ENCODE measurements at regions of chr4 and their contacts with region 1.

Region 1: GRCh38 chr4:102598086-102598761 is 97.1 kb downstream of the NFKB1 start:
- DNase-seq: peak; percentile 34
- H3K4me3 Mint-ChIP-seq: peak overlapping the region; percentile 37
- H3K27ac Mint-ChIP-seq: peak overlapping the region; percentile 89
- H3K4me1 Mint-ChIP-seq: peaks cover 78% of the 10 kb centered on the region
- H3K27me3 Mint-ChIP-seq: no peaks in the 10 kb centered on the region

Region 2: DNA sequence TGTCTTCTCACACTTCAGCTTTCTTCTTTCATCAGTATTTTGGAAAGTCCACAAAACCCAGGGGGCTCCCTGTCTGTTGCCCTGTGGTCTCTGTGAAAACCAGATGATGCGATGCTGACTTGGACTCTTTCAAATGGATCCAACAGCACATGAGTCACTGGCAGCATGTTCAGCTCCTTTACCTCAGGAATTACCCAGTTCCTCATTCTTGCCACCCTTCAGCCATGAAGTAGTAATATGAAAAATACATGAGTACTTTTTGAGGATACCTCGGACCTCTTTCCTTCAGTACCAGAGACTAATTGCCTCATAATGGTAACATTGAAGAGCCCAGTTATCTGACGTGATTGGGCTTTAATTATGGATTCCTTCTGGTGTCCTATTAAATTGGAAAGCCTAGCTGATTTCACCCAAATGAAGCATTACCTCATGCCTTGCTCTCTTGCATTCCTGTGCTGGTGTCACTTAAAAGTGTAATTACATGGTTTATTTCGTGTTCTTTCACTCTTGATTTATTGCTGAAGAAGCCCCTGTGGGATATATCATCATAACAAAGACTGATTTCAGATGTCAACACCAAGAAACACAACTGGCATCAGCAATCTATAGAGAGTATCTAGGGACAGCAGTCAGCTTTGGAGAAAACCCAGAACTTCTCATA is 33.7 kb before region 1 on chr4:
- intact Hi-C with region 1: loop called (anchors 1 kb)
- DNase-seq: no peak
- H3K4me3 Mint-ChIP-seq: no peak overlapping the region
- H3K27ac Mint-ChIP-seq: peak overlapping the region; percentile 69
- H3K4me1 Mint-ChIP-seq: peaks cover 79% of the 10 kb centered on the region
- H3K27me3 Mint-ChIP-seq: no peaks in the 10 kb centered on the region

Region 3: GRCh38 chr4:102578819-102579218 is 19.4 kb before region 1 on chr4:
- intact Hi-C with region 1: loop called (anchors 2 kb)
- DNase-seq: no peak
- H3K4me3 Mint-ChIP-seq: no peak overlapping the region
- H3K27ac Mint-ChIP-seq: peak overlapping the region; percentile 40
- H3K4me1 Mint-ChIP-seq: peaks cover 80% of the 10 kb centered on the region
- H3K27me3 Mint-ChIP-seq: no peaks in the 10 kb centered on the region

Region 4: GRCh38 chr4:102586644-102587021 is 11.6 kb before region 1 on chr4:
- intact Hi-C with region 1: loop called (anchors 1 kb)
- DNase-seq: peak; percentile 61
- H3K4me3 Mint-ChIP-seq: peak overlapping the region; percentile 47
- H3K27ac Mint-ChIP-seq: peak overlapping the region; percentile 60
- H3K4me1 Mint-ChIP-seq: peaks cover 86% of the 10 kb centered on the region
- H3K27me3 Mint-ChIP-seq: no peaks in the 10 kb centered on the region

Region 5: DNA sequence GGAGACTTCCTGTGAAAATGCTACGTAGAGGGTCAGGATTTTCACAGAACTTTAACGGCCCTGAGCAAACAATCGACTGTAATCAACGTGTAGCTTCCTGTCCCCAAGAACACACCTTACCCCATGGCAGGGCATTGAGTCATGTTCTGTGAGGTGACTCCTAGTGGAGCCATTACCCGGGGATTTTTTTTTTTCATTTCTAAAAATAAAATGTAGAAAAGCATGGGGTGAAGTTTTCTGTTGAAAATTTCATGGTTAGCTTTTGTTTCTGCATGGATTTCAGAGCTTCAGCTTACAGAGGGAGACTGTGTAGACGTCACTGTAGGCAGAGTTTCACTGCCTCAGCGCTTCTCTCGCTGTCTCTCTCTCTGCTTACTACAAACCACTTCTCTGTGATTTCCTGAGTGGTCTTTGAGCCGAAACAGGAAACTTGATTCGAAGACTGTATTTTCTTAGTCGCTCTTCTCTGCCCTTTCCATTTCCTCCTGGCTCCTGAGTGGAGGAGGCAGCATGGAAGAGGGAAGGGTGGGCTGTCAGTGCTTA is 14.7 kb after region 1 on chr4:
- intact Hi-C with region 1: loop called (anchors 1 kb)
- DNase-seq: peak; percentile 41
- H3K4me3 Mint-ChIP-seq: peak overlapping the region; percentile 70
- H3K27ac Mint-ChIP-seq: peak overlapping the region; percentile 95
- H3K4me1 Mint-ChIP-seq: peaks cover 83% of the 10 kb centered on the region
- H3K27me3 Mint-ChIP-seq: no peaks in the 10 kb centered on the region